ENCODE measurements at regions of chr2 and their contacts with region 1.

Region 1: GRCh38 chr2:230319211-230319862 is 7.7 kb upstream of the SP140L start:
- DNase-seq: peak; percentile 94
- H3K4me3 Mint-ChIP-seq: peak overlapping the region; percentile 58
- H3K27ac Mint-ChIP-seq: peak overlapping the region; percentile 93
- H3K4me1 Mint-ChIP-seq: peaks cover 48% of the 10 kb centered on the region
- H3K27me3 Mint-ChIP-seq: no peaks in the 10 kb centered on the region

Region 2: DNA sequence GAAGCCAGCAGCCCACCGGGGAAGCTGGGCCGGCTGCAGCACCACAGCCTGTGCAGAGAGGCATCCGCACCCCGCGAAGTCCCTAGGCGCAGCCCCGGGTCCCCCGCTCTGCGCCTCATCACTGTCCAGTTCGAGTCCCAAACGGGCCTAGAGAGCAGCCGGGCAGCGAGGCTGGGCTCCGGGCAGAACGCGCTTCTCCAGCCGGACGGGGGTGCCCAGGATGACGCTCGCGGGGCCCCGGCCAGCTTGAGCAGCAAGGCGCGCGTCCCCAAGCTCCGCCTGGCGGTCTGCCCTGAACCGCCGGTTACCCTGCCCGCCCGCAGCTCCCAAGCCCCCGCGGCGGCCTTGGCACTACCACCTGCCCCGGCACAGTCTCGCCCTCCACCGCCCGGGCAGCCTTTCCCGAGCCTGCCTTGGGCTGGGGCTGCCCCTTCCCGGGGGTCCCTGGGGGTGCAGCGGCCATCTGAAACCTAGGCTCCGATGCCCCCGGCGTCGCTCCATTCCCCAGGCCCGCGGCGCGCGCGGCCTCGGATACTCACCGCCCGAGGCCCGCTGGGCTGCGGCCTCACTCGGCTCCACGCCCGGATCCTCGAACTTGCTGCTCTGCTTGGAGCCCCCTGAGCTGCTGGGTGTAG is 251.2 kb before region 1 on chr2:
- intact Hi-C with region 1: loop called (anchors 1 kb)
- DNase-seq: peak; percentile 82
- H3K4me3 Mint-ChIP-seq: peak overlapping the region; percentile 80
- H3K27ac Mint-ChIP-seq: peak overlapping the region; percentile 90
- H3K4me1 Mint-ChIP-seq: peaks cover 18% of the 10 kb centered on the region
- H3K27me3 Mint-ChIP-seq: peaks cover 20% of the 10 kb centered on the region

Region 3: DNA sequence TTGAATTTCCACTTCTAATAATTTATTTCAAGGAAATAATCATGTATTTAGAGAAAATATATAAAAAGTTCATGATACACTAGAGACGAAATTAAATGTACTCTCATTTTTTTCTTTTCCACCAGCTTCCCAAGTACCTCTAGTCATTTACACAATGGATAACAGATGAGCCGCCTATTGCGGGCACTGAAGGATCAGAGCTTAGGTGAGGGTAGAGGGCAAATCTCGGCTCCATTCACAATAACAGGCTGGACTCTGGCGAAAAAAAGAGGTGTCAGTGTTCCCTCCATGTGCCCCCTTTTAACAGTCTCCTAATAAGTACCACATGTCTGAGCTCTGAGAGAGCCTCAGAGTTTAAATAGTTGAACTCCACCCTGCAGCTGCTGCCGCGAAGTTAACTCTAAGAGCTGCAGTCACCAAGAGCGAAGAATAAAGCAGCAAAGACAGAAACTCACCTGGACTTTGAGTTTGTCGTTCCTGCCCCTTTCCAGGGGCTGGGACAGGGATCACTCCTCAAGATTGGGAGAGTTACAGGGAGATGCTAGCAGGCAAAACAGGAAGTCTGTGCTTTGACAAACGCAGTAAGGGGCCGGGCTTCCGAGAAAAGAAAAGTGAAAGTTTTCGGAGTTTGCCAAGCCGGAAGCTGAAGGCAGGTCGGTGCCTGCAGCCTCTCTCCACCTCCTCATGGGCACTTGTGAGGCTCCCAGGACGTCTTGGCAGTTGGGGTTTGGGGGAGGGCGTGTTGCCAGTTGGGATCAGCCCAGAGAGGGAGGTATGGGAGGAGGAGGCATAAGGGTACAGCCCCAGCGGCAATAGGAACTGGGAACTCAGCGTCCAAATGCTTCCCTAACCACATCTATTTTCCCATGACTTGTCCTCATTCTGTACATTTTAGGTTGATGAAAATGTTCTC is 99.7 kb before region 1 on chr2 and contains the start of gene SP110:
- intact Hi-C with region 1: loop called (anchors 2 kb)
- DNase-seq: peak; percentile 96
- H3K4me3 Mint-ChIP-seq: peak within 1 kb of the TSS; percentile 98
- H3K27ac Mint-ChIP-seq: peak within 1 kb of the TSS; percentile 98
- H3K4me1 Mint-ChIP-seq: peaks cover 66% of the 10 kb centered on the region
- H3K27me3 Mint-ChIP-seq: no peaks in the 10 kb centered on the region
- total RNA-seq, gene SP110: 137 and 148 TPM in 2 replicates

Region 4: GRCh38 chr2:230268606-230269243 is 50.6 kb before region 1 on chr2:
- intact Hi-C with region 1: loop called (anchors 5 kb)
- DNase-seq: peak; percentile 63
- H3K4me3 Mint-ChIP-seq: peak overlapping the region; percentile 68
- H3K27ac Mint-ChIP-seq: peak overlapping the region; percentile 80
- H3K4me1 Mint-ChIP-seq: peaks cover 63% of the 10 kb centered on the region
- H3K27me3 Mint-ChIP-seq: no peaks in the 10 kb centered on the region

Region 5: GRCh38 chr2:230286048-230286447 is 33.3 kb before region 1 on chr2:
- intact Hi-C with region 1: loop called (anchors 1 kb)
- DNase-seq: no peak
- H3K4me3 Mint-ChIP-seq: no peak overlapping the region
- H3K27ac Mint-ChIP-seq: no peak overlapping the region
- H3K4me1 Mint-ChIP-seq: peaks cover 25% of the 10 kb centered on the region
- H3K27me3 Mint-ChIP-seq: no peaks in the 10 kb centered on the region

Region 6: DNA sequence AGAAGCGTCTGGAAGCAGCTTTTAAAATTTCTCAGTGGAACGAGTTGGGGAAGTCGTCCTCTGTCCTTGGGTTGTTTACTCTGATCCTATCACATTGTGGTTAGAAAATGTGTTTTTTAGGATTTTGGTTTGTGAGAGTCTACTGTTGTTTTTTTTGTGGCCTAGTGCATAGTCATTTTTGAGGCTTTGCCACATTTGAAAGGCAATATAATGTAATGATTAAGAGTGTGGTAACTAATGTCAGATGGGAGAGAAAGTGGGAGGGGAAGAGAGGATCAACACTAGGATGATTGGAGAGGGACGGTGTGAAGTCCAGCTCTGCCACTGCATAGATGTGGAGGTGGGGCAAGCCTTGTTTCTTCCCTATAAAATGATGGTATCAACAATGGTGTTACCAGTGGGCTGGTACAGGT is 16.1 kb after region 1 on chr2:
- intact Hi-C with region 1: loop called (anchors 1 kb)
- DNase-seq: peak; percentile 55
- H3K4me3 Mint-ChIP-seq: peak overlapping the region; percentile 75
- H3K27ac Mint-ChIP-seq: peak overlapping the region; percentile 89
- H3K4me1 Mint-ChIP-seq: peaks cover 55% of the 10 kb centered on the region
- H3K27me3 Mint-ChIP-seq: no peaks in the 10 kb centered on the region

Region 7: GRCh38 chr2:230439590-230439989 is 120.3 kb after region 1 on chr2:
- intact Hi-C with region 1: no loop called
- DNase-seq: no peak
- H3K4me3 Mint-ChIP-seq: peak overlapping the region; percentile 76
- H3K27ac Mint-ChIP-seq: peak overlapping the region; percentile 92
- H3K4me1 Mint-ChIP-seq: peaks cover 47% of the 10 kb centered on the region
- H3K27me3 Mint-ChIP-seq: no peaks in the 10 kb centered on the region